ENCODE measurements at regions of chr20 and their contacts with region 1.

Region 1: GRCh38 chr20:38748097-38748860 is at the start of gene ACTR5:
- DNase-seq: peak; percentile 96
- ATAC-seq: peak; percentile 92
- H3K4me3 Mint-ChIP-seq: peak within 1 kb of the TSS; percentile 97
- H3K27ac Mint-ChIP-seq: peak within 1 kb of the TSS; percentile 99
- H3K4me1 Mint-ChIP-seq: peaks cover 27% of the 10 kb centered on the region
- H3K27me3 Mint-ChIP-seq: peaks cover 7% of the 10 kb centered on the region
- CTCF ChIP-seq: no peak
- total RNA-seq, gene ACTR5: 12.8 and 13.7 TPM in 2 replicates

Region 2: DNA sequence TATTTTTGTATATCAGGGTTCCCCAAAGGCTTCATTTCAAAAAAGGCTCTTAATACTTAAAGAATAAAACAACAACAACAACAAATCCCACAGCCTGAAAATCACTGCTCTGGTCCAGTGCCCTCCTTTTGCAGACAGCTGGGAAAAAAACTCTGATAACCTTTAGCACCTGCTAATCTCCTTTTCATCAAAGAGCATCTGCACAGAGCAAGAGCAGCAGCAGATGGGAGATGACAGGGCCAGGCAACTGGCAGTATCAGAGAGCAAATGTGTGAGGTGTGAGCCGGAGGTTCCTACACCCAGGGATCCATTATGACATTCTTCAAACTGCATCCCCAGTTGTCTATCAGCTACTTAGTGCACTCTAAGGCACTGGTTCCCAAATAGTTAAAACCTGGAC is 740.8 kb before region 1 on chr20:
- CTCF ChIA-PET with region 1: no interaction called
- POLR2A ChIA-PET with region 1: no interaction called
- intact Hi-C with region 1: no loop called
- DNase-seq: no peak
- ATAC-seq: no peak
- H3K4me3 Mint-ChIP-seq: no peak overlapping the region
- H3K27ac Mint-ChIP-seq: no peak overlapping the region
- H3K4me1 Mint-ChIP-seq: peaks cover 1% of the 10 kb centered on the region
- H3K27me3 Mint-ChIP-seq: no peaks in the 10 kb centered on the region
- CTCF ChIP-seq: no peak

Region 3: DNA sequence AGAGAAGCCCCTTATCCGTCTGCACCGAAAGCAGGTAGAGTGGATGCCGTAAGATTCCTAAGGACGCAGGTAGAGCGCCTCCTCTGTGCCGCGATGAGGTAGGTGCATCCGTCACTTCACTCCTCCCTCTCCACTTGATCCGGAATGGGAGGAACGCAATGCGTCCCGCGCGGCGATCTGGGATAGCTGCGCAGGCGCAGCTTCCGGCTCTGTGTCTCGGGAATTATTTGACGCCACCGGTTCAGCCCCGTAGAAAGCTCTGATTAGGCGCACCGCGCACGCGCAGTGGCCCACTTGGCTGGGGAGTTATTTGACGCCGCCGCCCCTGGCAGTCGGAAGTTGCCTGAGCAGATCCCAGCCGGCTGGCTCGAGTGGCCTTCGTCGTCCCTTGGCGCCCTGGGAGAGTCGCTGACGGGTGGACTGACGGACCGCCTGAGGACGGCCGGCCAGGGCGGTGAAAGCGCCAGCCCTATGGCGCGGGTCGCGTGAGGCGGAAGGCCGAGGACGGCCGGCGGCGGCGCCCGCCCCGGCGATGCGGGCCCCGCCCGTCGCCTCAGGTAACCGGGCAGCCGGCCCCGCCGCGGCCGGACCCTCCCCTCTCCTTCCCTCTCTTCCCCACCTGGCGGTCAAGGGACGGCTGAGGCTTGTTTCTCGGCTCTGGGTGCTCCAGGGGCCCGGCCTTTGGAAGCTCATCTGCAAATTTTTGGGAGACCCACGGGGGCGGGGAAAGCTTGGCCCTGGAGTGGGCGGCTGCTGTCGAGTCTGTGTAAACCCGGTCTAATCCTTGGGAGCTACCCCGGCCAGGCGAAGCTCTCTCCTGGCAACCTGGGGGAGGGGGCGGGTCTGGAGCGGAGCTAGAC is 275.5 kb before region 1 on chr20 and contains the start of gene RALGAPB:
- CTCF ChIA-PET with region 1: no interaction called
- POLR2A ChIA-PET with region 1: no interaction called
- intact Hi-C with region 1: loop called (anchors 1 kb)
- DNase-seq: peak; percentile 95
- ATAC-seq: peak; percentile 88
- H3K4me3 Mint-ChIP-seq: peak within 1 kb of the TSS; percentile 91
- H3K27ac Mint-ChIP-seq: peak within 1 kb of the TSS; percentile 85
- H3K4me1 Mint-ChIP-seq: peaks cover 44% of the 10 kb centered on the region
- H3K27me3 Mint-ChIP-seq: no peaks in the 10 kb centered on the region
- CTCF ChIP-seq: no peak
- total RNA-seq, gene RALGAPB: 40.2 and 48.3 TPM in 2 replicates

Region 4: DNA sequence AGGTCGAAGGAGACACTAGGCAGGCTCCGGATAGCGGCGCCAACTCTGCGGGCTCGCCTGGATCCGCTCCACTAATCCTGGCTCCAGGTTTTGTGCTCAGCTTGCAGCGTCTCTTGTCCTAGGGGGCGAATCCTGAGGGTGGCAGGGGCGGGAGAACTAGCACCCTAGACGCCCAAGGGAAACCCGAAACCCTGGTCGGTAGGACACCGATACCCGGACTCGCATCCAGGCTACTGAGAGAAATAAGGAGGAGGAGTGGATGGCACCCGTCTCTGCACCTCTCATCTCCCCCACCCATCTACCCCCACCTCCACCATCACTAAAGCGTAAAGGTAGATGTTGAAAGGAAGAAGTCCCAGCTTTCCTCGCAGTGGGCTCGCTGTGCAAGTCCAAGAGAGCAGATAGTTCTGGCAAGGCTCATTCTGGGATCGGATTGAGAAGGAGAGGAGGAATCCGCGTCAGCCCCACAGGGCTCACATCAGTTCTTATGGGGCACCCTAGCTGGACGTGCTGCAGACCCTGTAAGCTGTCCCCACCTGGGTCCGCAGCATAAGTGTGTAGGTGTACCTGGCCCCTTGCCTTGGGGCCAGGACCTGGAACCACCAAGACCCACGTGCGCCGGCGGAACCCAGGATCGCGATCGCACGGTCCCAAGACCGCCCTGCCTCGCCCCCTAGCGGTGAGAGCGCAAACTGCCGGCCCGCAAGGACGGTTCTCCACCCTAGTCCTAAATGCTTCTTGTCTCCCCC is 17.1 kb before region 1 on chr20:
- CTCF ChIA-PET with region 1: interaction called, 17 read pairs
- POLR2A ChIA-PET with region 1: no interaction called
- intact Hi-C with region 1: loop called (anchors 1 kb)
- DNase-seq: peak; percentile 68
- ATAC-seq: peak; percentile 76
- H3K4me3 Mint-ChIP-seq: peak overlapping the region; percentile 65
- H3K27ac Mint-ChIP-seq: no peak overlapping the region
- H3K4me1 Mint-ChIP-seq: peaks cover 52% of the 10 kb centered on the region
- H3K27me3 Mint-ChIP-seq: peaks cover 88% of the 10 kb centered on the region
- CTCF ChIP-seq: peak; percentile 77

Region 5: DNA sequence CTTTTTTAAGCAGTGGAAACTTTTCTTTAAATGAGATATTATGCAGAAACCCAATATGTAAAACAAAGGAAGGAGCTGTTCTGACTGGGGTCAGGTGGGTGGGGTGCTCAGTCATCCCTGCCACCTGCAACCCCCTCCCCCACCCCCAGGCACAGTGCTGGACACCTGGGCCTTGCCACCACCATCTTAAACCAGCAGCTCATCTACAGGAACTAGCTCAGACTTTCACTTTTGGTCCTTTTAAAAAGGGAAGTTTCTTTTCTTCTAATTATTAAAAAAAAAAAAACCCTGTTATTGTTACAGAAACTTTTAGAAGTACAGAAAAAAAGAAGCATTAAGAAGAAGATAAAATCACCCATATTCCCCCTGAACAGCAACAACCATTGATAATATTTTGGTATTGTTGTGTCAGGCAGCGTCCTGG is 94.3 kb after region 1 on chr20:
- CTCF ChIA-PET with region 1: interaction called, 3 read pairs
- POLR2A ChIA-PET with region 1: no interaction called
- intact Hi-C with region 1: loop called (anchors 1 kb)
- DNase-seq: peak; percentile 51
- ATAC-seq: peak; percentile 97
- H3K4me3 Mint-ChIP-seq: peak overlapping the region; percentile 75
- H3K27ac Mint-ChIP-seq: peak overlapping the region; percentile 97
- H3K4me1 Mint-ChIP-seq: peaks cover 93% of the 10 kb centered on the region
- H3K27me3 Mint-ChIP-seq: no peaks in the 10 kb centered on the region
- CTCF ChIP-seq: no peak

Region 6: GRCh38 chr20:38907918-38908677 is 159.8 kb after region 1 on chr20:
- CTCF ChIA-PET with region 1: no interaction called
- POLR2A ChIA-PET with region 1: interaction called, 10 read pairs
- intact Hi-C with region 1: no loop called
- DNase-seq: no peak
- ATAC-seq: no peak
- H3K4me3 Mint-ChIP-seq: no peak overlapping the region
- H3K27ac Mint-ChIP-seq: peak overlapping the region; percentile 37
- H3K4me1 Mint-ChIP-seq: no peaks in the 10 kb centered on the region
- H3K27me3 Mint-ChIP-seq: no peaks in the 10 kb centered on the region
- CTCF ChIP-seq: no peak